H1 (cell line): ENCODE measurements at regions of chr3 and their contacts with region 1.

Region 1: DNA sequence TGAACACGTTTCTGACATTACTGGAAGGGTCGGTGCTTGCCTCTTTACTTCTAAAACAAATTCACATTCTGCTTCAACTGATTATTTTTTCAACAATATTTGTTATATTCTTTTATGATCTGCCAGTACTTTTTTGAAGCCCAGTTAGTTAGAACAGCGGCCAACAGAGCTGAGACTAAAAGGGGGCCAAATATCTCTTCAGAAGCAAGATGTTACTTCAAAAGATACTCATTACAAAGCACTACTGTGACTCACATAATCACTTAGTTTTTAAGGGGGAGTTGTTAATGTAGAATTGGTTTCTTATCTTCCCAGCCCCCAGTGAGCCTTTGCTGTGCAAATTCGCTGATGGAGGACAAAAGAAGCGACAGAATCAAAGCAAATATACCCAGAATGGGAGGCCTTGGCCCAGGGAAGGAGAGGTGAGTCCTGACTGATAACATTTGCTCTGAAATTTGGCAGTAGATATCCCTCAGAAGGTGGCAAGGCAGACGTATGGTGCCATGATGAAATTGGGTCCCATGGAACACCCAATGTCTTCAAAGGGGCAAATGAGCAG is 587.8 kb downstream of the RBMS3 start:
- DNase-seq: no peak
- H3K4me3 ChIP-seq: no peak overlapping the region
- H3K27ac ChIP-seq: no peak overlapping the region
- H3K4me1 ChIP-seq: peaks cover 0 to 7% (median 4%) of the 10 kb centered on the region in 4 experiments; a peak in 4 of 7 replicates
- H3K27me3 ChIP-seq: no peaks in the 10 kb centered on the region
- CTCF ChIP-seq: no peak
- EP300 ChIP-seq: no peak
- POLR2A ChIP-seq: no peak
- RAD21 ChIP-seq: no peak

Region 2: GRCh38 chr3:29850641-29851040 is 18.0 kb before region 1 on chr3:
- CTCF ChIA-PET with region 1: interaction called, 10 read pairs
- POLR2A ChIA-PET with region 1: no interaction called
- DNase-seq: no peak
- H3K4me3 ChIP-seq: no peak overlapping the region
- H3K27ac ChIP-seq: no peak overlapping the region
- H3K4me1 ChIP-seq: no peaks in the 10 kb centered on the region; a peak in 1 of 7 replicates
- H3K27me3 ChIP-seq: no peaks in the 10 kb centered on the region
- CTCF ChIP-seq: peak in 2 of 3 experiments; percentile 51 to 82; a peak in 3 of 4 replicates
- EP300 ChIP-seq: no peak
- POLR2A ChIP-seq: no peak
- RAD21 ChIP-seq: peak; percentile 68 to 69